ENCODE measurements at regions of chr3 and their contacts with region 1.

Region 1: DNA sequence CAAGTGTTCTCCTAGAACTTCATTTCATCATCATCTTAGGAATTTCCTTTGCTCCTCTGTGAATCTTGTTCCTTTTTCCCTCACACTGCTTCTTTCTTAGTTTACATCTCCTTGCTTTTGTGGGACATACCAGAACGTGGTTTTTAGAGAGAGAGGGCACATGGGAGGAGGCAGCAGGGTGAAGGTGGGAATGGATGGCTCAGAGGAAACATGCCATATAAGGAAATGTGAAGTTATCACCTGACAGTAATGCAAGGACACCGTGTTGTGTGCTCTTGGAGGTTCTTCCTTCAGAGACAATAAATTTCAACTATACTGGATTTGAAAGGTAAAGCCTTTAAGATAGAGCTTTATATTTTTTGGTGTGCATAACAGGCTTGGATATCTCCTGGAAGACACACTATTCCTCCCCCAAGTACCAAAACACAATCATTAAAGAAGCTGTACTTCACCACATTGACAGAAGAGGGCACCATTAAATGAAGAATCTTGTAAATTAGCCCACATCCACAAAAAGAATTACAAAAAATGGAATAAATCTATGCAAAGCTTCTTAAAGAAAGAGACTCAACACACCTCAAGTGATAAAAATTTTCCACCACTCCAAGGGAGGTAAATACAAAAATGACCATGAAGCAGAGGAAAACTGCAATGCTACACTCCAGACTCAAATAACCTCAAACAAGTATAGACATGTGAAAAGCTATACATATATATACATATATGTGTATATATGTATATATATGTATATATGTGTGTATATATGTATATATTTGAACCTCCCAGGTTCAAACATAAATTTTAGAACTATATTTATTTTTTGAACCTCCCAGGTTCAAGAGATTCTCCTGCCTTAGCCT is 26.1 kb downstream of the RPL39L start:
- DNase-seq: no peak
- ATAC-seq: no peak
- H3K4me3 Mint-ChIP-seq: no peak overlapping the region
- H3K27ac Mint-ChIP-seq: no peak overlapping the region
- H3K4me1 Mint-ChIP-seq: peaks cover 9% of the 10 kb centered on the region
- H3K27me3 Mint-ChIP-seq: no peaks in the 10 kb centered on the region

Region 2: DNA sequence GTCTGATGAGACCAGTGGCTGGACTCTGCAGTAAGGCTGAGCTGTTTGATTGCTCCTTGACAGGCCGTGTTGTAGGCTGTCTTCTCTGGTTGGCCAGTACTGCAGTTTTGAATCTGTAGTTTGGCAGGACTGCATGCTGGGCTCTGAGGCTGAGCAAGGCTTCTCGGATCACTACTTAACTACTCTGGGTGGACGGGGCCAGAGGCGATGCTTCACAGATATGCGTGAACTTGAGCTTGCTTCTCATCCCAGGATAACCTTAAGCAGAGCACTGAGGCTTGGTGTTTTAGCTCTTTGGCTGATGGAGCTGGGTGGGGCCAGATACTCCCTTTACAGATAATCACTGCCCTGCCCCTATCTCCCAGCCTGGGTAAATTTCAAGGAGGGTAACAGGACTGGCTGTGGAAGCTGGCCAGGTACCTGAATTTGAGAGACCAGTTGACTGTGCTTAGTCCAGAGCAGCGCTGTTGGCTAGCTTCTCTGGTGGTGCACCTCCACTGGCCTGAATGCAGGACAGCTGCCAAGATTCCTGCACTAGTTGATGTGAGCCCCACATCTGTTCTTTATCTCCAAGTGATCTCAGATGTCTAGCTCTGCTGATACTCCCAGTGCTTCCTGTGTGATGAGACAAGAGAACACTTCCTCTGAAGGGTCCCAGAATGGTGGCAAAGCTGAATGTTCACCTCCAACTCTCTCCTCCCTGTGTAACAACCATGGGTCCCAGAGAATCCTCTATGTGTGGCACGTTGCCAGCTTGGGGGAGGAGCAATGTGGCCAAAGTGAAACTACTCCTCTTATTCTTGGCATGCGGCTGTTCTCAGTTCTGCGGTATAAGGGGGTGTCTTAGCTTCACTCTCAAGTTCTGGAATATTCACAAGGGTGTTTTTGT is 11.7 kb before region 1 on chr3:
- CTCF ChIA-PET with region 1: interaction called, 29 read pairs
- POLR2A ChIA-PET with region 1: interaction called, 3 read pairs
- DNase-seq: peak; percentile 70
- ATAC-seq: peak; percentile 81
- H3K4me3 Mint-ChIP-seq: peak overlapping the region; percentile 32
- H3K27ac Mint-ChIP-seq: peak overlapping the region; percentile 74
- H3K4me1 Mint-ChIP-seq: peaks cover 35% of the 10 kb centered on the region
- H3K27me3 Mint-ChIP-seq: no peaks in the 10 kb centered on the region

Region 3: DNA sequence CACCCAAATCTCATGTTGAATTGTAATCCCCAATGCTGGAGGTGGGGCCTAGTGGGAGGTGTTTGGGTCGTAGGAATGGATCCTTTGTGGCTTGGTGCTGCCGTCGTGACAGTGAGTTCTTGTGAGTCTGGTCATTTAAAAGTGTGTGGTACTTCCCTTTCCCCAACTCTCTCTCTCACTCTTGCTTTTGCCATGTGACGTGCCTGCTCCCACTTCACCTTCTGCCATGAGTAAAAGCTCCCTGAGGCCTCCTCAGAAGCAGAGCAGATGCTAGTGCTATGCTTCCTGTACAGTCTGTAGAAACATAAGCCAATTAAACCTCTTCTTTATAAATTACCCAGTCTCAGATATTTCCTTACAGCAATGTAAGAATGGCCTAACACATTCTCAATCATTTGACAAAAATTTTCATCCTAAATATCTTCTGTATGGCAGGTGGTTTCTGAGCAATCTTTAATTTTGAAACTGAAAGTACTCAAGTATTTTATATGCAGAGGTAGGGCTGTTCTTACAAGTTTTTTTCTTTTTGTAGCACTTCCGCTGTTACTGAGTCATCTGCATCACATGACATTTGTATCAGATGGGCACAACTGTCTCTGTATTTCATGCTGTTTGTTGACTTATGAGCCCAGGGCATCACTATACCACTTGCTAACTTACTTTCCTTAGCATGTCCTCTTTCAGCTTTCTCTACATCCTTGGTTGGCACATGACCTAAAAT is 17.3 kb after region 1 on chr3:
- CTCF ChIA-PET with region 1: interaction called, 100 read pairs
- POLR2A ChIA-PET with region 1: no interaction called
- DNase-seq: peak; percentile 64
- ATAC-seq: peak; percentile 99
- H3K4me3 Mint-ChIP-seq: peak overlapping the region; percentile 65
- H3K27ac Mint-ChIP-seq: peak overlapping the region; percentile 94
- H3K4me1 Mint-ChIP-seq: peaks cover 38% of the 10 kb centered on the region
- H3K27me3 Mint-ChIP-seq: no peaks in the 10 kb centered on the region

Region 4: DNA sequence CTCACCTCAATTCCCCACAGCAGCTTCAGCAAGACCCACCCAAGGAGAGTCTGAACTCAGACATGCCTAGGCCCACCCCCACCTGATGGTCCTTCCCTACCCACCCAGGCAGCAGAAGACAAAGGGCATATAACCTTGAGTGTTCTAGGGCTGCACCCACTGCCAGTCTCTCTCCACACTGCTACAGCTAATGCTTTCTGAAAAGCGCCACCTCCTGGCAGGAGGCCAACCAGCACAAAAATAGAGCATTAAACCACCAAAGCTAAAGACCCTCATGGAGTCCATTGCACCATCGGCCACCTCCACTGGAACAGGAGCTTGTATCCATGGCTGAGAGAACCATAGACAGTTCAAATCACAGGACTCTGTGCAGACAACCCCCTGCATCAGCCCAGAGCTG is 37.4 kb after region 1 on chr3:
- CTCF ChIA-PET with region 1: interaction called, 96 read pairs
- POLR2A ChIA-PET with region 1: interaction called, 3 read pairs
- DNase-seq: peak; percentile 71
- ATAC-seq: peak; percentile 64
- H3K4me3 Mint-ChIP-seq: no peak overlapping the region
- H3K27ac Mint-ChIP-seq: no peak overlapping the region
- H3K4me1 Mint-ChIP-seq: peaks cover 3% of the 10 kb centered on the region
- H3K27me3 Mint-ChIP-seq: peaks cover 37% of the 10 kb centered on the region

Measured in activated CD8-positive, alpha-beta T cell treated with anti-CD3 and anti-CD28 coated beads, Interleukin-2, amount 10 ng/mL, durations not matched to agents 7 days and 5 days (primary cell).